A673 (cell line): ENCODE measurements at regions of chr3 and their contacts with region 1.

Region 1: GRCh38 chr3:122679085-122679881 is 1.4 kb upstream of the PARP14 start:
- DNase-seq: peak; percentile 89
- H3K4me3 ChIP-seq: peak overlapping the region; percentile 71
- H3K27ac ChIP-seq: no peak overlapping the region
- H3K4me1 ChIP-seq: peaks cover 12% of the 10 kb centered on the region
- H3K27me3 ChIP-seq: no peaks in the 10 kb centered on the region
- CTCF ChIP-seq: peak; percentile 82

Region 2: DNA sequence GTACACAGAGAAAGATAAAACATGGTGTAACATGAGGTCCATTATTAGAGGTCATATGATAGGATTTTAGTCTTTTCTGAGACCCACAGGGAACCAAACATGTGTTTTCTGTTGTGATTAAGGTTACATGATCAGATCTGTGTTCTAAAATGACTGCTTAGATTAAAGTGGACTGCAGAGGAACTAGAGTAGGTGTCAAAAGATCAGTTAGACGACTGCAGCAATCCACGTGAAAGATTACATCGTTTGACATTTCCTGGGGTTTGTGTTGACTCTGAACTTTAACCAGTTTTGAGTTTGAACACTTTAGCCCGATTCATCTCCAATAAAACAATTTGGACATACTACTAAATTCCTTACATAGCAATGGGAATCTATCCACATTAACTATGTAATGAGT is 301.3 kb before region 1 on chr3:
- CTCF ChIA-PET with region 1: no interaction called
- POLR2A ChIA-PET with region 1: no interaction called
- intact Hi-C with region 1: no loop called
- DNase-seq: no peak
- H3K4me3 ChIP-seq: no peak overlapping the region
- H3K27ac ChIP-seq: no peak overlapping the region
- H3K4me1 ChIP-seq: peaks cover 5% of the 10 kb centered on the region
- H3K27me3 ChIP-seq: no peaks in the 10 kb centered on the region
- CTCF ChIP-seq: no peak

Region 3: GRCh38 chr3:122392868-122393844 is 286.1 kb before region 1 on chr3:
- CTCF ChIA-PET with region 1: interaction called, 15 read pairs
- POLR2A ChIA-PET with region 1: no interaction called
- intact Hi-C with region 1: loop called (anchors 1 kb)
- DNase-seq: peak; percentile 75
- H3K4me3 ChIP-seq: no peak overlapping the region
- H3K27ac ChIP-seq: peak overlapping the region; percentile 12
- H3K4me1 ChIP-seq: peaks cover 38% of the 10 kb centered on the region
- H3K27me3 ChIP-seq: no peaks in the 10 kb centered on the region
- CTCF ChIP-seq: peak; percentile 79

Region 4: DNA sequence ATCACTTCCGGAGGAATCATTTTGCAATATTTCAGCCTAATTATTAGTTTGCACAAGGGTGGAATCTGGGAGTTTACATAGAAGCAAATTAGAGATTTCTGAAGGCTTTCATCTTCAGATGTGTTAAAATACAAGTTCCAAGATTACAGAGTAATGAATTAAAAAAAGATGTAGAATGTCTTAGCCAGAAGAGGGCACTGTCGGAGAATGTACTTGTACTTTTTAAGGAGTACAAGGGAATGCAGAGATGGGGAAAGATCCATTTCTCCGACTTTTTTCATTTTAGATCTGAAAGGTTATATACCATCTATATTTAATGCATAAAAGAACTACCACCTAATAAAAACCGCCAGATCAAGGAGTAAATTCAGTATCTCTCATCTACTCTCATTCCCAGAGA is 220.3 kb before region 1 on chr3:
- CTCF ChIA-PET with region 1: interaction called, 6 read pairs
- POLR2A ChIA-PET with region 1: no interaction called
- intact Hi-C with region 1: loop called (anchors 1 kb)
- DNase-seq: peak; percentile 55
- H3K4me3 ChIP-seq: no peak overlapping the region
- H3K27ac ChIP-seq: no peak overlapping the region
- H3K4me1 ChIP-seq: no peaks in the 10 kb centered on the region
- H3K27me3 ChIP-seq: no peaks in the 10 kb centered on the region
- CTCF ChIP-seq: peak; percentile 56

Region 5: GRCh38 chr3:122564155-122564912 is 114.9 kb before region 1 on chr3 and contains the starts of genes DTX3L and PARP9:
- CTCF ChIA-PET with region 1: no interaction called
- POLR2A ChIA-PET with region 1: no interaction called
- intact Hi-C with region 1: loop called (anchors 1 kb)
- DNase-seq: peak; percentile 80
- H3K4me3 ChIP-seq: peak within 1 kb of the TSS; percentile 63
- H3K27ac ChIP-seq: peak within 1 kb of the TSS; percentile 83
- H3K4me1 ChIP-seq: peaks cover 15% of the 10 kb centered on the region
- H3K27me3 ChIP-seq: no peaks in the 10 kb centered on the region
- CTCF ChIP-seq: no peak
- total RNA-seq, gene DTX3L: 16.6 and 18.9 TPM in 2 replicates
- total RNA-seq, gene PARP9: 10.6 and 10.8 TPM in 2 replicates